ENCODE measurements at regions of chr5 and their contacts with region 1.

Region 1: DNA sequence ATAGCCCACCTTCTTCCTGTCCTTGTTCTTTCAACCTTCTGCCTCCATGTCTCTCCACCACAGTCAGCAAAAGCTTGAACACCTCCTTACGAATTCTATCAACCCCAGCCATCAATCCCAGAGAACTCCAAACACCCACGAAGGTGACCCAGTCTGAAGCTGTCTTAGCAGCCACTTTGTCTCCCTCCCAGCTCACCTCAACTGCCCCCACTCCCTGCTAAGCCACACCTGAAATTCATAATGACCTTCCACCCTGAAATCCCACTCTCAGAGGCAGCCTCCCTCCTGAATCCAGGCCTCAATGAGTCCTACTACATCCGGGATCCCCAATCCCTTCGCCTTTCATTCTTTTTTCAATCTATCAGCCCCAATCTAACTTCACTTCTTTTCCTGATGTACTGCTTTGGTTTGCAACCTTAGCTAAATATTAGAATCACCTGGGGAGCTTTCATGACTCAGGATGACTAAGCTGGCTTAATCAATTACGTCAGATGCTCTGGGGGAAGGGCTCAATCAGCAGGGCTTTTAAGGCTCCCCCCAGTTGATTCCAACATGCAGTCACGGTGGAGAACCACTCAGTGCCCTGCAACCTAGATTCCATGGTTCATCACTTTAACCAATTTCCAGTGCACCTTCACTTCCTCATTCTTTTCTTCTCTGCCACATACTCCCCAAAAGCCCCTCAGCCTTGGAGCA is 32.2 kb downstream of the BHMT start:
- DNase-seq: peak; percentile 66
- ATAC-seq: peak; percentile 77
- H3K4me3 ChIP-seq: peak overlapping the region in 1 of 2 experiments; percentile 40; a peak in 2 of 4 replicates
- H3K27ac ChIP-seq: peak overlapping the region; percentile 19; the same call in 1 of the 2 replicates
- H3K4me1 ChIP-seq: peaks cover 13 to 23% of the 10 kb centered on the region in 2 experiments
- H3K27me3 ChIP-seq: no peaks in the 10 kb centered on the region
- CTCF ChIP-seq: no peak
- POLR2A ChIP-seq: no peak
- RAD21 ChIP-seq: no peak

Region 2: DNA sequence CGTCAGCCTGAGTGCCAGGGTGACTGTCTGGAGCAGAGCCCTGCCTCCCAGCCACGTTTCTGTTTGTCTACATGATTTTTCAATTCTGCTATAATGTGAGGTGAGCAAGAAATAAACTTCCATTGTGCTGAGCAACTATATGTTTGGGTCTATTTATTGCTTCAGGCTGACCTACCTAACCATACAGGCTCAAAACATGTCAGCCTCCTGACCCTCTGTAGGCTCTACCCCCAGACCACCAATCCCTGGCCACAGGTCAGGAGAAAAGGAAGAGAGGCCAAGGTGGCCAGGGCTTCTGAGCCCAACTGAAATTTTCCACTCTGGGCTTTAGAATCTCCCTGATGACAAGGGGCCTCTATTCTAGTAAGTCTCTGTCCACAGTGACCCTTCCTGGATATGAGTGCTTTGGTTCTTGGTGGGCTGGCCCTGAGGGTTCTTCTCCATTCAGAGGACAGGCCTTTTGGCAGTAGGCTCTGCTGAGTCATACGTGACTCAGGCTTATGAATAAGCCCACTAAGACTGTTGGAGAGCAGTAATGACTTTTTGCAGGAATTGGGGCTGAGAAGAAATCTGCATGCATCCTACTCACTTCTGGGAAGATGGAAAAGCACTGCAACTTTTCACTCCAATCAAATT is 1250.5 kb before region 1 on chr5:
- CTCF ChIA-PET with region 1: no interaction called
- POLR2A ChIA-PET with region 1: no interaction called
- RAD21 ChIA-PET with region 1: no interaction called
- intact Hi-C with region 1: no loop called
- DNase-seq: peak; percentile 79
- ATAC-seq: peak; percentile 95
- H3K4me3 ChIP-seq: no peak overlapping the region
- H3K27ac ChIP-seq: peak overlapping the region; percentile 39; the same call in 1 of the 2 replicates
- H3K4me1 ChIP-seq: peaks cover 9 to 26% of the 10 kb centered on the region in 2 experiments
- H3K27me3 ChIP-seq: no peaks in the 10 kb centered on the region
- CTCF ChIP-seq: no peak
- POLR2A ChIP-seq: no peak
- RAD21 ChIP-seq: no peak

Region 3: DNA sequence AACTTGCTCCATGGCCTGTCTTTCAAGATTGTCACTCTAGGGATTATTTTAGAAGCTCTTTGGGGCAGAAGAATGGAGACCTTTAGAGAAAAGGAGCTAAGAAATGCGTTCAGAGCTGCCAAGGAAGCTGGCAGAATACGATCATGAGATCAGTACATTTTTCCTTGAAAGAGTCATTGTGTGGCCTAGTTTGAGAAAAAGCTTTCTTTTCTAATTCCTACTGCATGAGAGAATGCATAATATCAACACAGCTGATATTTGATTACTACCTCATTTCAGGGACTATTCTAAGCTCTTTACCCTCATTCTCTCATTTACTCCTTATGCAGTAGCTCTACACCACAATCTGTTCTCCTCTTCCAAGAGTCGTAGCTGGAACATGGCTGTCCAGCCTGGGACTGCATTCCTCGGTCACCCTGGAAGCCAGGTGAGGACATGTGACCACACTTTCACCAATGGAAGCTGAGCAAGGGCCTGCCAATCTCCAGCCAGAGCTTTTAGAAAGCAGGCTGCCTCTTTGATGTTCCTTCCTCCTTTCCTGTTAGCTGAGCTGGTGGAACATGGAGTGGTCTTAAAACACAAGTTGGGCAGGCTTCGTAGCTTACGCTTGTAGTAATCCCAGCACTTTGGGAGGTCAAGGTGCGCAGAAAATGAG is 396.0 kb before region 1 on chr5:
- CTCF ChIA-PET with region 1: no interaction called
- POLR2A ChIA-PET with region 1: no interaction called
- RAD21 ChIA-PET with region 1: no interaction called
- intact Hi-C with region 1: no loop called
- DNase-seq: no peak
- ATAC-seq: no peak
- H3K4me3 ChIP-seq: no peak overlapping the region
- H3K27ac ChIP-seq: no peak overlapping the region
- H3K4me1 ChIP-seq: no peaks in the 10 kb centered on the region
- H3K27me3 ChIP-seq: no peaks in the 10 kb centered on the region
- CTCF ChIP-seq: no peak
- POLR2A ChIP-seq: no peak
- RAD21 ChIP-seq: no peak

Region 4: DNA sequence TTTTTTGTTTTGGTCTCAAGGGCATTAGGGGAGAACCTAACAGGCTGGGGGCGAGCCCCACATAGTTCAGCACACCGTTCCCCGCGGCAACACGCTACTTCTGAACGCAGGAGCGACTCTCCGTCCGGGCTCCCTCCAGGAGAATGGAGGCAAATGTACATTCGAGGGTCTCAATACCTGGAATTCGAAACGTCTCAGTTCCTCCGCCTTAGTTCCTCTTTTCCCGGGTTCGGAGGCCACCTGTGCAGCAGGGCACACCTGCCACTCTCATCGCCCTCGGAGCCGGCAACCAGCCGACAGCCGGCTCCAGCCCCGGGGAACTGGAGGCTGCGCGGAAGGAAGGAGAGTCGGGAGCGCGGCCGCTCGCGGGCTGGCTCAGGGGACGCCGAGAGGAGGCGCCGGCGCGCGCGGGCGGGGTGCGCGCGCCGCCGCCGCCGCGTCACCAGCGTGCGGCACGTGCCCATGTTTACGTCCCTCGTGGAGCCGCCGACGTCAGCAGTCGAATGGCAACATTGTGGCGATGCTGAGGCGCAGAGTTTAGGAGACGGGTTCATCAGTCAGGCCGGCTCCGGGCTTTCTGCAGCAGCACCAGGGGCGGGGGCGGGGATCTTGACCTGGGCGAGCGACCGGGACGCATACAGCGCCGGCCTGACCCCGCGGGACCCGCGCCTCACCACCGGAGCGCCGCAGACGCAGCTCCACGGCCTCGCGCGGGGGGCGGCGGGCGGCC is 92.0 kb after region 1 on chr5 and contains the start of gene JMY:
- CTCF ChIA-PET with region 1: no interaction called
- POLR2A ChIA-PET with region 1: no interaction called
- RAD21 ChIA-PET with region 1: no interaction called
- intact Hi-C with region 1: loop called (anchors 10 kb)
- DNase-seq: peak; percentile 55
- ATAC-seq: peak; percentile 92
- H3K4me3 ChIP-seq: peak within 1 kb of the TSS; percentile 76 to 81
- H3K27ac ChIP-seq: peak within 1 kb of the TSS; percentile 77
- H3K4me1 ChIP-seq: peaks cover 6 to 18% of the 10 kb centered on the region in 2 experiments; a peak in 3 of 4 replicates
- H3K27me3 ChIP-seq: no peaks in the 10 kb centered on the region
- CTCF ChIP-seq: no peak
- POLR2A ChIP-seq: peak; percentile 89
- RAD21 ChIP-seq: no peak; the same call in 1 of the 2 replicates
- total RNA-seq, gene JMY: 15.6 TPM

Measured in HCT116 (cell line).